ENCODE measurements at regions of chr15 and their contacts with region 1.

Region 1: DNA sequence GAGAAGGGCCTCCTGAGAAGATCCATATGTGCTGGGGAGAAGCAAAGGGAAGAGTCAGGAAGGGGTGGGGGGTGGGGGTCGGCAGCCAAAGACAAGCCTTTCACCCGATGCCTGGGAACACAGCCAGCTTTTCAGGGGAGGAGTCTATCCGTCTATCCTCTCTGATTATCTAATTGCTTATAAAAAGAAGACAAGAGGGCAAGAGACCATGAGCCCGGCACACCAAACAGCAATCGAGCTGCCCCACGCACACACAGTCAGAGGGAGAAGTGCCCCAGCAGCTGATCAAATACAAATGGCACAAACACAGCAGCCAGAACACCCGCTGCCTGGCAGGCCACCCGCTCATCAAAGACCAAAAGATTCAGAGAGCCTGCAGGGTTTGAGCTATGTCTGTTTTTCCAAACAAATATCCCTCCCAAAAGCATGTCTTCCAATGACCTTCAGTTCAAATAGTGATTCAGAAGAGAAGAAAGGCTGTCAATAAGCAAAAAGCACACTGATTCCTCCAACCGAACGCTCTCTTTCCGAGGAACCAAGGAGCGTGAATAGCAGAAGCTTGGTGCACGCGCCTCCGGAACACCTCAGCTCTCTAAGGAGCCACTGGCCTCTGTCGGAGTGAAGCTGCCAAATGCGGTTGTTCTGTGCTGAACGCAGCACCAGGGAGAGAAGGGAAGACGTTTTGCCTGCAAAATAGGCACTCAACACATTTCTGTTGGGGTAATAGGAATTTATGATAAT is 419.2 kb downstream of the OCA2 start:
- DNase-seq: no peak
- ATAC-seq: peak; percentile 40
- H3K4me3 Mint-ChIP-seq: no peak overlapping the region; the same call in 1 of the 2 replicates
- H3K27ac Mint-ChIP-seq: peak overlapping the region; percentile 2; the same call in 1 of the 2 replicates
- H3K4me1 Mint-ChIP-seq: peaks cover 27% of the 10 kb centered on the region
- H3K27me3 Mint-ChIP-seq: peaks cover 8% of the 10 kb centered on the region
- CTCF ChIP-seq: no peak

Region 2: DNA sequence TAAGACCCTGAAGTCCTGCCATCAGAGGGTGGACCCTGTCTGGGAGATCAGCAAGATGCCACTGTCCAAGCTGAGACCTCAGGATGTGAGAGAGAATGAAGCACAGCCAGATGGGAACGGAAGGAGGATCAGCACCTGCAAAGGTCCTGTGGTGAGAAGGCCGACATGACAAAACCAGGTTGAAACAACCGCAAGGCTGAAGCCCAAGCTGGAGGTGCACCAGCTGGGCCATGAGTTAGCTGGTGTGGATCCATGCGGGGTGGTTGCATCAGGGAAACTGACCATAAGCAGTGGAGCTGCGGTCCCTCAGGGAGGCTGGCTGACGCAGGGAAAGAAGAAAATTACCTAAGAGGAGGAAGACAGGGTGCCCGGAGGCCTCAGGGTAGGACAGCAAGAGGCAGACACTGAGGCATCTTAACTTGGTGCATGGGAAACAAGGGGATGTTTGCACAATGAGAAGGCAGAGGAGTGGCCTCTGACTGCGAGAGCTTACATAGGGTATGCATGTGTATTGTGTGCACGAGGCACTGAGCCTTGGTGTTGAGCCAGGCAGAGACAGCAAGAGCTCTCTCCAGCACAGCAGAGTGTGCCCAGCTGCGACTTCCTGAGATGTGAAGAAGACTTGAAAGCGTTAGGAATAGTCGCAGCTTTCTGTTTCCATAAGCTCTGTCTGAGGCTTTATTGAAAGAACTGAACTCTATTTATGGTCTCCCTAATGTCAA is 78.5 kb before region 1 on chr15:
- CTCF ChIA-PET with region 1: interaction called, 25 read pairs
- POLR2A ChIA-PET with region 1: no interaction called
- DNase-seq: no peak
- ATAC-seq: peak; percentile 81
- H3K4me3 Mint-ChIP-seq: no peak overlapping the region
- H3K27ac Mint-ChIP-seq: peak overlapping the region; percentile 82
- H3K4me1 Mint-ChIP-seq: peaks cover 17% of the 10 kb centered on the region
- H3K27me3 Mint-ChIP-seq: no peaks in the 10 kb centered on the region; the same call in 1 of the 2 replicates
- CTCF ChIP-seq: no peak

Region 3: DNA sequence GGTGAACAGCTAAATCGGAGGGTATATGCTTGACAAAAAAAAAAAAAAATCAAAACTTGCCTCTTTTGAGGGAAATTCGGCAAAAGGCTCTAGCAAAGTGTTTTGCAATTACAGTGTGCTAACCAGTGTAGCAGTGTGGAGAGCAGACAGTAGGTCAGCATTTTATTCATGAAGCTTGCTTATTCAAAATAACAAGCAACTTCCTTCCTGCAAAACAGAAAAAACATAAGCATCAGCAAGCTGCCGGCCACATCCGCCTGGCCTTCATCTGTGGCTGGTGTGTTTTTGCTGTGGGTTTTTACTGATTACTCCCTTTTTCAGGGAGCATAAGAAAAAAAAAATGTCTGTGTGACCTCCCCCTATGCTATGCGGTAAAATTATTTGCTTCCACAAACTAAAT is 14.9 kb before region 1 on chr15:
- CTCF ChIA-PET with region 1: interaction called, 27 read pairs
- POLR2A ChIA-PET with region 1: no interaction called
- DNase-seq: no peak
- ATAC-seq: no peak
- H3K4me3 Mint-ChIP-seq: no peak overlapping the region
- H3K27ac Mint-ChIP-seq: peak overlapping the region; percentile 40; the same call in 1 of the 2 replicates
- H3K4me1 Mint-ChIP-seq: peaks cover 12% of the 10 kb centered on the region
- H3K27me3 Mint-ChIP-seq: no peaks in the 10 kb centered on the region
- CTCF ChIP-seq: no peak

Region 4: GRCh38 chr15:27694506-27695087 is 14.7 kb after region 1 on chr15:
- CTCF ChIA-PET with region 1: interaction called, 45 read pairs
- POLR2A ChIA-PET with region 1: no interaction called
- DNase-seq: no peak
- ATAC-seq: no peak
- H3K4me3 Mint-ChIP-seq: no peak overlapping the region
- H3K27ac Mint-ChIP-seq: no peak overlapping the region
- H3K4me1 Mint-ChIP-seq: no peaks in the 10 kb centered on the region
- H3K27me3 Mint-ChIP-seq: no peaks in the 10 kb centered on the region
- CTCF ChIP-seq: no peak

Region 5: GRCh38 chr15:27768732-27769475 is 89.0 kb after region 1 on chr15:
- CTCF ChIA-PET with region 1: interaction called, 20 read pairs
- POLR2A ChIA-PET with region 1: no interaction called
- DNase-seq: no peak
- ATAC-seq: no peak
- H3K4me3 Mint-ChIP-seq: no peak overlapping the region
- H3K27ac Mint-ChIP-seq: no peak overlapping the region
- H3K4me1 Mint-ChIP-seq: peaks cover 32% of the 10 kb centered on the region
- H3K27me3 Mint-ChIP-seq: peaks cover 5% of the 10 kb centered on the region; the same call in 1 of the 2 replicates
- CTCF ChIP-seq: no peak

Region 6: DNA sequence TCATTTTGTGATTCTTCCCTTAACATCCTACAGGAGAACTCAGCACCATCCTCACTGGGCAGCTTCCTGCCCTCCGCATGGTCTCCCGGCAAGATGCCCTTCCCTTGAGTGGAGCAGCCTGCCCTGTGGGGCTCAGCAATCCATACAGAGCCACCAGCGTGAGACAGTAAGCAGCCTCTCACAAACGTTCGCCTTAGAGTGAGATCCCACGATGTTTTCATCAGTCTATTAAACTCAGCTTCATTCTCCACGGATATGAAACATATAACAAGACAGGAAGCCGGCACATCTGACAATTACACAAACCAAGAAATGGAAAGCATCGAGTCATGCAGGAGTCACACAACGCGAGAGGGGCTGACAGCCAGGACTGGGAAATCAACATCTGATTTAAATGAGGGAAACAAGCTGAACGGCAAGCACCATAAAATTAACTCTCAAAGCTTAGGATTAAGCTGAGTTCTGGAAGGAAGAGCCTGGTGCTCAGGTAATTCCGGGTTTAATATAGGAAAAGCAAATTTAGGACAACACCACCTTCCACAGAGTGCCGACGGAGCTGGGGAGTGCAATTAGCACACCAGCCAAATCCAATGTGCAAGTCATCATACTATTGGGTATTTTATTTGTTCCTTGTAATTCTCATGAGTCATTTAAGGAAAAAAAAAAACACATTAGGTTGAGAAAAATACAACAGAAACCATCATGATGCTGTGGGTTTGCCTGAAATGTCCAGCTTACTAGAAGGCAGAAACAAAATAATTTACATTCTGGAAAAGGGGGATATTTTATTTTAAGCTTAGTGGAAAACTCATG is 147.2 kb after region 1 on chr15:
- CTCF ChIA-PET with region 1: interaction called, 12 read pairs
- POLR2A ChIA-PET with region 1: no interaction called
- DNase-seq: no peak
- ATAC-seq: peak; percentile 20; the same call in 1 of the 2 replicates
- H3K4me3 Mint-ChIP-seq: no peak overlapping the region
- H3K27ac Mint-ChIP-seq: no peak overlapping the region
- H3K4me1 Mint-ChIP-seq: 0 out of 2 replicates have a peak, but pooled peaks cover 3% of the 10 kb centered on the region
- H3K27me3 Mint-ChIP-seq: no peaks in the 10 kb centered on the region
- CTCF ChIP-seq: no peak

Measured in WTC11 (cell line).